WTC11 (cell line): ENCODE measurements at regions of chr5 and their contacts with region 1.

Region 1: GRCh38 chr5:149852641-149853330 is 91.8 kb downstream of the PDE6A start:
- DNase-seq: peak; percentile 82
- ATAC-seq: peak; percentile 94
- H3K4me3 Mint-ChIP-seq: no peak overlapping the region
- H3K27ac Mint-ChIP-seq: 0 out of 2 replicates have a peak overlapping the region, but pooled peaks have one; percentile 57
- H3K4me1 Mint-ChIP-seq: peaks cover 4% of the 10 kb centered on the region; the same call in 1 of the 2 replicates
- H3K27me3 Mint-ChIP-seq: no peaks in the 10 kb centered on the region
- CTCF ChIP-seq: peak; percentile 77; the same call in 1 of the 2 replicates

Region 2: DNA sequence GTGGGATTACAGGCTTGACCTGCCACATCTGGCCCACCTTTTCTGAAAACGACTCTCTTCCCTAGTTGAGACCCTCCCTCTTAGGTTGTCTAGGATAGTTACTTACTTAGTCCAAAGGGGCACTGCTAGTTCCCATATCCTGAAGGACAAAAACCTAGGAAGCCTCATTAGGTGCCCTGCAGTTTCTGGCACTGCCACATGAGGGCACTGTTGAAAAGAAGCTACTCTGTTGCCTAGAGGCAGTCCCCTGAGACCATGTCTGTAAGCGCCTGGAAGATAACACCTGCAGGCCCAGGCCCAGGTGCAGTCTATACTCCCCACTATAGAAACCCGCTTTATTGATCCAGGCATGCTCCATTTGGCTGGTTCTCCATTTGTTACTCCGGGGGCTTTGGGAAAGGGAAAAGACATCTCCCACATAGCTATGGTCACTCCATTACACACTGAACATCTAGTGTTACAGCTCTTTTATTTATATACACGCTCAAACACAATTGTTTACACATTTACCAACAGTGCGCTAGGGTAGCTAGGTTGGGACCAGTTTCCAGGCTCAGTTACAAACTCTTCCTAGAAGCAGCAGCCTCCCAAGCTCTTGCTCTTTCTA is 196.1 kb before region 1 on chr5:
- CTCF ChIA-PET with region 1: interaction called, 15 read pairs
- POLR2A ChIA-PET with region 1: no interaction called
- DNase-seq: peak; percentile 93
- ATAC-seq: peak; percentile 89
- H3K4me3 Mint-ChIP-seq: no peak overlapping the region
- H3K27ac Mint-ChIP-seq: no peak overlapping the region
- H3K4me1 Mint-ChIP-seq: peaks cover 16% of the 10 kb centered on the region
- H3K27me3 Mint-ChIP-seq: no peaks in the 10 kb centered on the region
- CTCF ChIP-seq: peak; percentile 90

Region 3: GRCh38 chr5:149694007-149694406 is 158.8 kb before region 1 on chr5:
- CTCF ChIA-PET with region 1: no interaction called
- POLR2A ChIA-PET with region 1: no interaction called
- DNase-seq: no peak
- ATAC-seq: no peak
- H3K4me3 Mint-ChIP-seq: no peak overlapping the region
- H3K27ac Mint-ChIP-seq: no peak overlapping the region
- H3K4me1 Mint-ChIP-seq: no peaks in the 10 kb centered on the region
- H3K27me3 Mint-ChIP-seq: no peaks in the 10 kb centered on the region
- CTCF ChIP-seq: no peak

Region 4: DNA sequence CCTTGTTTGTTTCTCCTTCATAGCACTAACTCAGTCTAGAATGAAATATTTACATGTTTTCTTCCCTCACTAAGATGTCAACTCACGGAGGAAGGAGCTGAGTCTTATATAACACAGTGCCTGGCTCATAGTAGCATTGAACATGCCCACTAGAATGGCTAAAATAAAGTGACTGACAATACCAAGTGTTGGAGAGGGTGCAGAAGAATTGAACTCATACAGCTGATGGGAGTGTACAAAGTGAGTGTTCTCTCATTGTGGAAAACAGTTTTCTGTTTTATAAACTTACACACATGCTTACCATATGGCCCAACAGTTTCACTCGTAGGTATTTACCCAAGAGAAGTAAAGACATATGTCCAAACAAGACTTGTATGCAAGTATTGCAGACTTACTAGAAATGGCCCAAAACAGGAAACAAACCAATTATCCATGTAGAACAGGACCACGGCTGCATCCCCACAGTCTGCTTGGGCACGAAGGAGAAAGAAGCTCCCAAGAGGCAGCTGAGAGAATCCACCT is 35.2 kb before region 1 on chr5:
- CTCF ChIA-PET with region 1: interaction called, 12 read pairs
- POLR2A ChIA-PET with region 1: no interaction called
- DNase-seq: no peak
- ATAC-seq: no peak
- H3K4me3 Mint-ChIP-seq: no peak overlapping the region
- H3K27ac Mint-ChIP-seq: no peak overlapping the region
- H3K4me1 Mint-ChIP-seq: peaks cover 30% of the 10 kb centered on the region
- H3K27me3 Mint-ChIP-seq: no peaks in the 10 kb centered on the region
- CTCF ChIP-seq: no peak

Region 5: DNA sequence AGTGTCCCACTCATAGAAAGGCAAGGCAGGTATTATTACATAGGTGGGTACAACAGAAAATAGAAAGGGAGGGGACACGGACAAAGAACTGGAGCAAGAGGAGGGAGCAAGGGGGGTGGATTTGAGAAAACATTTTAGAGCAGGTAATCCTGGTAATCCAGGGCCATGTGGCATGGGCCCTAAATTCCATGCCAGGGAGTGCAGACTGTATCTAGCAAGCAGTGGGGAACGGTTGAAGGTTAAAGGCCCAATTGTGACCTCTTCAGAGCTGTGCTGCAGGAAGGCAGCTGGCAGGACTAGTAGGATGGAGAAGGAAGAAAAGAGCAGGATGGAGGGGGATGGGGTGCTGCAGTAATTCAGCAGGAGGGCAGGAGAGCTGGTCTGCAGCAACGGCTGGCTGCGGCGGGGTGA is 16.6 kb after region 1 on chr5:
- CTCF ChIA-PET with region 1: interaction called, 41 read pairs
- POLR2A ChIA-PET with region 1: no interaction called
- DNase-seq: no peak
- ATAC-seq: peak; percentile 86
- H3K4me3 Mint-ChIP-seq: no peak overlapping the region
- H3K27ac Mint-ChIP-seq: no peak overlapping the region
- H3K4me1 Mint-ChIP-seq: peaks cover 11% of the 10 kb centered on the region
- H3K27me3 Mint-ChIP-seq: no peaks in the 10 kb centered on the region
- CTCF ChIP-seq: no peak

Region 6: DNA sequence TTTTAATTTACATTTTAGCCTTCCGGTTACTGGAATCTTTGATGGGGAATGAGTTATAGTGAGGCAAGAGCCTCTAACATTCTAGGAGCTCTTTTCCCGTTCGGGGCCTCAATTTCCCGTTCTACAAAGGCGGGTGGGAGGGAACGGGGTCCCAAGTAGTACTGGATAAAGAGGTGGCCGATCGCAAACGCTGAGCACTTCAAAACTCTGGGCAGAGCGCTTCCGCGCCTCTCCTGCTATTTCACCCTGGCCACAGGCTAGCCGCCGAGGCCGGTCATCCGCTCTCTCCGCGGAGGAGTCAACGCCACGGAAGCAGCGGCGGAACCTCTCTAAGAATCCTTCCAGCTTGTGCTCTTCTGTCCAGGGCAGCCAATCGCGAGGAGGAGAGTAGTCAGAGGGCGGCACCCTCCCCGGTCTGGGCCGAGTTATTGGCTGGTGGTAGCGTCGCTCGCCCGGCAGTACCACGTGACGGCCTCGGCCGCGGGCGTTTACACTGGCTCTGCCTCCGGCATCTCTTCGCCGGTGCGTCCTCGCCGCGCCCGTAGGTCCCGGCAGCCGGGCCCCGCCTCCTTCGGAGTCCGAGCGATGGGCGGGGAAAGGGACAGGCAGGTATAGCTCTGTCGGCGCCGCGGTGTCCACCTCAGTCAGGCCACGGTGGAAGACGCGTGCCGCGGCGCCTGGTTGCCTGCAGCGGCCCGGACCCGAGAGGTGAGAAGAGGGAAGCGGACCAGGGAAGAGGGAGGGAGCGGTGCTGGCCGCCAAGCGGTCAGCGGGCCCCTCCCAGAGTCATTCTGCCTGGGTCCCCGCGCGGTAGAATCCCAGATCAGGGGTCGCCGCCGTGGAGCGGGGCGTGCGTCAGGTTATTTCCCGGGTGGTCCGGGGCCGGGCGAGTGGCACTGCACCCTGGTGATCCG is 107.7 kb after region 1 on chr5 and contains the start of gene SLC26A2:
- CTCF ChIA-PET with region 1: interaction called, 60 read pairs
- POLR2A ChIA-PET with region 1: interaction called, 5 read pairs
- DNase-seq: peak; percentile 97
- ATAC-seq: peak; percentile 98
- H3K4me3 Mint-ChIP-seq: peak within 1 kb of the TSS; percentile 79
- H3K27ac Mint-ChIP-seq: peak within 1 kb of the TSS; percentile 99
- H3K4me1 Mint-ChIP-seq: peaks cover 19% of the 10 kb centered on the region
- H3K27me3 Mint-ChIP-seq: peaks cover 8% of the 10 kb centered on the region; the same call in 1 of the 2 replicates
- CTCF ChIP-seq: no peak
- total RNA-seq, gene SLC26A2: 10.8 to 11.1 TPM (median 11.1 TPM) in 3 replicates